ENCODE measurements at regions of chr1 and their contacts with region 1.

Region 1: GRCh38 chr1:155063550-155064110 is at the start of gene EFNA4:
- DNase-seq: peak; percentile 67 to 90 (median 80)
- ATAC-seq: peak; percentile 86 to 88
- H3K4me3 Mint-ChIP-seq: peak within 1 kb of the TSS; percentile 81 to 98 (median 96)
- H3K27ac Mint-ChIP-seq: peak within 1 kb of the TSS; percentile 33 to 96 (median 85)
- H3K4me1 Mint-ChIP-seq: peaks cover 21 to 50% (median 36%) of the 10 kb centered on the region in 4 donors
- H3K27me3 Mint-ChIP-seq: no peaks in the 10 kb centered on the region
- polyA plus RNA-seq, gene EFNA4: 1.0 to 2.6 (median 1.1) TPM

Region 2: GRCh38 chr1:155044812-155045690 is 18.6 kb before region 1 on chr1:
- POLR2A ChIA-PET with region 1: interaction called, 22 read pairs
- DNase-seq: peak in 9 of 10 donors; percentile 40 to 82 (median 59)
- ATAC-seq: peak; percentile 95 to 99
- H3K4me3 Mint-ChIP-seq: no peak overlapping the region
- H3K27ac Mint-ChIP-seq: peak overlapping the region in 1 of 10 donors; percentile 17
- H3K4me1 Mint-ChIP-seq: peaks cover 3 to 11% (median 7%) of the 10 kb centered on the region in 4 donors
- H3K27me3 Mint-ChIP-seq: peaks cover 0 to 2% (median 2%) of the 10 kb centered on the region in 5 donors

Region 3: GRCh38 chr1:155050560-155051341 is 12.9 kb before region 1 on chr1 and contains the start of gene ADAM15:
- POLR2A ChIA-PET with region 1: interaction called, 22 read pairs
- DNase-seq: peak; percentile 58 to 83 (median 72)
- ATAC-seq: peak; percentile 79 to 85
- H3K4me3 Mint-ChIP-seq: peak within 1 kb of the TSS; percentile 79 to 91 (median 86)
- H3K27ac Mint-ChIP-seq: peak within 1 kb of the TSS; percentile 23 to 86 (median 64)
- H3K4me1 Mint-ChIP-seq: peaks cover 9 to 27% (median 22%) of the 10 kb centered on the region in 4 donors
- H3K27me3 Mint-ChIP-seq: peaks cover 0 to 2% (median 0%) of the 10 kb centered on the region in 5 donors
- polyA plus RNA-seq, gene ADAM15: 2.8 to 4.5 (median 3.1) TPM

Region 4: DNA sequence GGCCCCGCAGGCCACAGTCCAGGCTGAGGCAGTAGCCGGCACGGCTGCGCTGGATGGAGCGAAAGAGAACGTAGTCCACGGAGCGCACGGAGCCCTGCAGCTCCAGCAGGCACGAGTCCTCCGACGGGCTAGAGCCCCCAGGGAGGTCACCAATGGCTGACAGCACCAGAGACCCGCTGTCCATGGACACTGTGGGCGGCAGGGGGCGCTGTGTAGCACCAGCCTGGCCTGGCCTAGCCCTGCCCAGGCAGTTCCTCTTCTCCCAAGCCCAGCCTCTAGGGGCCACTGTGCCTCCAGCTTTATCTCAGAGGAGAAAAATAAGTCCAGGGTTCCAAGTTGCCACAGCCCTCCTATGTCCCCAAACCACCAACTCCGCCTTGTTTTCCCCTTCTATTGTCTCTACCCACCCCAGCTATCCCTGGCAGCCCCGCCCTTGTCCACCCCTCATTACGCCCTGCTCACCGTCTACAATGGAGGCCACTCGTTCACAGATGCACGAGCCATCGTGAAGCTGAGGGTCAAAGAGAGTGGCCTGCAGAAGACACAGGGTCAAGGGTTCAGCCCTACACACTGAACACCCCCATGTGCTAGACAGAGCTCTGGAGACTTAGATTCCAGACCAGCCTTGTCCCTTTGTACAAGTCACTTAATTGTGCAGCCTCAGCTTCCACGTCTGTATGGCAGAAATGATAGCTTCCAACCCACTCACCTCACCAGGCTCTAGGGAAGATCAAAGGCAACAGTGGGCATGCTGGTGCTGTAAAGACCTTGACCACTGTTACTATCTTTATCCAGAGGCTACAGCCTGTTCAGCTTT is 187.2 kb after region 1 on chr1:
- POLR2A ChIA-PET with region 1: no interaction called
- DNase-seq: peak; percentile 90 to 99 (median 96)
- ATAC-seq: peak; percentile 93 to 99
- H3K4me3 Mint-ChIP-seq: peak overlapping the region; percentile 60 to 82 (median 72)
- H3K27ac Mint-ChIP-seq: peak overlapping the region in 9 of 10 donors; percentile 31 to 84 (median 69)
- H3K4me1 Mint-ChIP-seq: peaks cover 14 to 33% (median 29%) of the 10 kb centered on the region in 4 donors
- H3K27me3 Mint-ChIP-seq: no peaks in the 10 kb centered on the region

Measured in naive thymus-derived CD8-positive, alpha-beta T cell (primary cell).